ENCODE measurements at regions of chr14 and their contacts with region 1.

Region 1: GRCh38 chr14:24965934-24966578 is 83.9 kb downstream of the STXBP6 start:
- DNase-seq: peak in 1 of 2 donors; percentile 24
- ATAC-seq: peak; percentile 81 to 94 (median 89)
- H3K4me3 ChIP-seq: peak overlapping the region in 1 of 10 donors; percentile 19
- H3K27ac ChIP-seq: peak overlapping the region in 9 of 10 donors; percentile 20 to 82 (median 68)
- H3K4me1 ChIP-seq: peaks cover 5 to 51% (median 33%) of the 10 kb centered on the region in 9 donors
- H3K27me3 ChIP-seq: no peaks in the 10 kb centered on the region
- CTCF ChIP-seq: no peak

Region 2: GRCh38 chr14:25001601-25002000 is 35.5 kb after region 1 on chr14:
- intact Hi-C with region 1: loop called in 3 of 10 experiments (anchors 2 to 5 kb)
- DNase-seq: no peak
- ATAC-seq: peak in 6 of 8 donors; percentile 34 to 82 (median 50)
- H3K4me3 ChIP-seq: no peak overlapping the region
- H3K27ac ChIP-seq: peak overlapping the region in 9 of 10 donors; percentile 4 to 76 (median 60)
- H3K4me1 ChIP-seq: peaks cover 0 to 63% (median 44%) of the 10 kb centered on the region in 9 donors
- H3K27me3 ChIP-seq: no peaks in the 10 kb centered on the region
- CTCF ChIP-seq: no peak

Region 3: DNA sequence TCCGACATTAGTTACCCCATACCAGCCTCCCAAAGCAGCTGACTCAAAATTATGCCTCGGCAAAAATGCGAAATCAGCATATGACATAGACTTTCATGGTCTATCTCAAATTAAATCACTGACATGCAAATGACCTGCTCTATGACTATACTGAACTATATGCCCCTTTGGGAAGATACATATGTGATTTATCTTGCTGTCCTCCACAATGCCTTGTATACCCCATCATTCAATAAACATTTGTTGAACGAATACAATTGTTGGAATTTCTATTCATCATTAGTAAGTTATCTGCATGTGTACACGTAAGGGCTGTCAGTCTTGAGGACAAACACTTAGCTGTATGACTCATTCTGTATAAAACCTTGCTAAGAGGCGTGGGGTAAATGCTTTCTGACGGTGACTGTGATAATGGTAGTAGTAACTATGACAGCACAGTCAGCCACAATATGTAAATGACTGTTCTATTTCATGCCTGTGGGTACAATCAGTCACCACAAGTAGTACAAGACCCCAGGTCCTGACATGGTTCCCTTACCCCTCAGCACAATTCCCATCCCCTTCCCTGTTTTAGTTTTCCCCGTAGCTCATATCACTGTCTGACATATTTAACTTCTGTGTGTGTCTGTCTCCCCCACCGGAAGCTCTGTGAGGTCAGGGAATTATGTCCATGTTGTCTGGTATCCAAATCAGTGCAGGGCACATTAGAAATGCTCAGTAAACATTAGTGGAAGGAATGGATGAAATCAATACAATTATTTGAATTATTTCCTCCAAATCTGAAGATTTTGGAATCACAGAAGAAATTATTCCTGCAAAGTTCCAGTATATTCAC is 41.1 kb after region 1 on chr14:
- intact Hi-C with region 1: loop called in 2 of 10 experiments (anchors 5 kb)
- DNase-seq: peak in 1 of 2 donors; percentile 7
- ATAC-seq: peak; percentile 27 to 95 (median 80)
- H3K4me3 ChIP-seq: no peak overlapping the region
- H3K27ac ChIP-seq: peak overlapping the region in 5 of 10 donors; percentile 2 to 43 (median 33)
- H3K4me1 ChIP-seq: peaks cover 0 to 89% (median 56%) of the 10 kb centered on the region in 9 donors
- H3K27me3 ChIP-seq: no peaks in the 10 kb centered on the region
- CTCF ChIP-seq: no peak

Region 4: DNA sequence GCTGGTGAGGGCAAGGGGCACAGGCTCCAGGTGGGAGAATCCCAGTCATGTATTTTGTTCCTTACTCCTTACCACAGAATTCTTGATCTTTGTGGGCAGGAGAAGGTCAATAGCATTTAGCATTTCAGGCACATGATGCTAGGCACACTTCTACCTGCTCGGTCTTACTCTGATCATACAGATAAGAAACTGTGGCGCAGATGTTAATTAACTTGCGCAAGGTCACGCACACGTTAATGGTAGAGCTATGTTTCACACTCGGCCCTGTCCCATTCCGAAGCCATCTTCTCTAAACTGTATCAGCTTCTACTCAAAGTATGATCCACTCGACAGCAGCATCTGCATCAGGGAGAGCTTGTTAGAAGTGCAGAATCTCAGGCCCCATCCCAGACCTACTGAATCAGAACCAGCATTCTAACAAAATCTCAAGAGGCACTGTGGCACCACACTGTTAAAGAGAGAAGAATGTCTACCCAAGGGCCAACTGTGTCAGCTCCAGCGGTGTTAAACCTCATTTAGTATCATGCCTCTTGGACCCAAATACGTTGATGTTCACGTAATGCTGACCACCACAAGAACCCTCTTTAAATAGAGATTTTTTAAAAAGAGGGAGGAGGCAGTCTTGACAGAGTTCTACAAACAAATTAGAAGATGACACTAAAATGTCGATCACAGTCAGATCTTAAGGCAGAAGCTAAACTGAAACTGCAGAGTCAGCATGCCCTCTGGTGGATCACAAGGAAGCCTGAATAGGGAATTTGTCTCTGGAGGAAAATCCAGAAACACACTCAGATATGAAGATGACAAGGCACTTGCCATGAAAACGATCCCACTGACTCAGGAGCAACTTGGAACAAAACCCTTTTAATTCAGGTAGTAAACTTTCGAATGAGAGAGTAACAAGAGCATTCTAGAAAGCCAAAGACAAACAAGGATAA is 76.6 kb after region 1 on chr14:
- intact Hi-C with region 1: loop called in 4 of 10 experiments (anchors 5 to 10 kb)
- DNase-seq: peak in 1 of 2 donors; percentile 50
- ATAC-seq: peak in 6 of 8 donors; percentile 23 to 60 (median 49)
- H3K4me3 ChIP-seq: peak overlapping the region in 2 of 10 donors; percentile 16 to 26
- H3K27ac ChIP-seq: peak overlapping the region in 3 of 10 donors; percentile 2 to 52 (median 11)
- H3K4me1 ChIP-seq: peaks cover 0 to 52% (median 31%) of the 10 kb centered on the region in 9 donors
- H3K27me3 ChIP-seq: peaks cover 0 to 2% (median 0%) of the 10 kb centered on the region in 7 donors
- CTCF ChIP-seq: peak in 8 of 9 donors; percentile 44 to 72 (median 60)

Region 5: DNA sequence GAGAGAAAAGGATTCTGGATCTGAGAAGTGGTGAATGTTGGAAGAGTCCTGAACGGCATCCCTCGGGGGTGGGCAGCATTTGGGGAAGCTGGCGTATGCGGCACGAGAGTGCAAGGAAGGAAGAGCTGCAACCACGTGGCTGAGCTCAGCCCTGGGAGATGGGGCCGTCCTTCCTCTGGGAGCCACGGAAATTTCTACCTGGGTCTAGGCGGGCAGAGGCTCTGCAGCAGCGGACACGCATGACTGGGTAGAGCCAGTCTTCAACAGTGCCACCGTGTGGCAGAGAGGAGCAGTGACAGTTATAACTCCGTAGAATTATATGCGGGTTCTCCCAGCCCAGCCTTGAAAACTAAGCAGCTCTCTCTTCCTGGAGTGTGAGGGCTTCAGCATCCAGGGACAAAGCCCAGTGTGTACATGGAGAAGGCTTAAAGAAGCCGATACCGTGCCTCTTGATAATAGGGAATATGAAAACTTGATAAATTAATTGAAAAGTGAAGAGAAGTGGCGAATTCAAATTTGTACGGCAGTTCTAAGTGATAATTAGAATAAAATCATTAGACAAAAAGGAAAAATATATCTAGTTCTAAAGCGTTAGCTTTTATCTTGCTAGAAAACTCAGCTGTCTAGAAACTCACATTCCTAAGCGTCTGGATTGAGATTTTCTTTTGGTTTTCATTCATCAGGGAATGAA is 166.8 kb after region 1 on chr14:
- intact Hi-C with region 1: loop called in 1 of 10 experiments (anchors 10 kb)
- DNase-seq: peak; percentile 44 to 51
- ATAC-seq: peak; percentile 92 to 97 (median 96)
- H3K4me3 ChIP-seq: peak overlapping the region in 3 of 10 donors; percentile 6 to 9 (median 8)
- H3K27ac ChIP-seq: no peak overlapping the region
- H3K4me1 ChIP-seq: peaks cover 0 to 9% (median 0%) of the 10 kb centered on the region in 9 donors
- H3K27me3 ChIP-seq: peaks cover 0 to 34% (median 11%) of the 10 kb centered on the region in 7 donors
- CTCF ChIP-seq: peak; percentile 77 to 93 (median 87)